Activated T-helper 2 cell treated with anti-CD3 and anti-CD28 coated beads, Interferon-gamma antibody, Interleukin-2, Interleukin-4, amounts not matched to agents 10 μg/mL and 5 μg/mL and 100 μg/mL, durations not matched to agents 14 hours and 24 hours and 36 hours (primary cell): ENCODE measurements at regions of chr3 and their contacts with region 1.

Region 1: DNA sequence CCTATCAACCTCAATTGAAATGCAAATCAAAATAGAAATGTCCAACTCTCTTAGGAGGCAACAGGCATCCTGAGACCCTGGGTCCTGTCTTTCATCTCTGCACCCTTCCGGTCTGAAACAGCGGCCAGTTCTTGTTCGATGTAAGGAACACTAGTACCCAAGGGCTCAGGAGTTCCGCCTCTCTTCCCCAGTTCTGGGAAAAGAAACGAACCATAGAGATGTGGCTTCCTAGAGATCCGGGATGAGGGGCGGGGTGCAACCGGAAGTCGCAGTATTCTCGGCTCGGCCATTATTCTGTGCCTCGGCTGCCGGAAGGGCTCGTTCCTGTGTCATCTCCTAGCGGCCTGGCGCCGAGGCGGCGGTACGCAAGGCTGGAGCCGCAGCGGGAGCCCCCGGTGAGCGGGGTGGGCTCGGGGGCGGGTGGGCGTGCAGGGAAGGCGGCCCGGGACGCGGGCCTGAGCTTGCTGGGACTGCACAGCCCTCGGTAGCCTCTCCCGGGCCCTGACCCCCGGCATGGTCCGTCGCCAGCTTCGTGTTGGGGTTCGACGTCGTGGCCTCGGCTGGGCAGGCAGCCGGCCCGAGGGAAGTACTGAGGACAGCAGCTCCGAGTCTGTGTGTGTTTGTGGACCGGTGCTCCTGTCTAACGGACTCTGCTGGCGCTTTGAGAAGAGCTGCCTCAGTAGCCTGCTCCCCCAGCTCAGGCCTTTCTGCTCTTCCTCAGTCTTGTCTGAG is at the start of gene ZNF197:
- DNase-seq: peak; percentile 53
- H3K4me3 Mint-ChIP-seq: peak within 1 kb of the TSS; percentile 88
- H3K27ac Mint-ChIP-seq: peak within 1 kb of the TSS; percentile 69
- H3K4me1 Mint-ChIP-seq: peaks cover 17% of the 10 kb centered on the region
- H3K27me3 Mint-ChIP-seq: no peaks in the 10 kb centered on the region
- total RNA-seq, gene ZNF197: 10.4 and 10.7 TPM in 2 replicates

Region 2: GRCh38 chr3:44477312-44478030 is 147.4 kb before region 1 on chr3 and contains the start of gene ZNF445:
- intact Hi-C with region 1: loop called (anchors 5 kb)
- DNase-seq: peak; percentile 76
- H3K4me3 Mint-ChIP-seq: peak within 1 kb of the TSS; percentile 91
- H3K27ac Mint-ChIP-seq: peak within 1 kb of the TSS; percentile 82
- H3K4me1 Mint-ChIP-seq: peaks cover 27% of the 10 kb centered on the region
- H3K27me3 Mint-ChIP-seq: no peaks in the 10 kb centered on the region
- total RNA-seq, gene ZNF445: 22.6 and 24.0 TPM in 2 replicates

Region 3: GRCh38 chr3:44648564-44649229 is 23.8 kb after region 1 on chr3 and contains the start of gene ZNF35:
- intact Hi-C with region 1: loop called (anchors 2 kb)
- DNase-seq: peak; percentile 14
- H3K4me3 Mint-ChIP-seq: peak within 1 kb of the TSS; percentile 84
- H3K27ac Mint-ChIP-seq: no peak within 1 kb of the TSS
- H3K4me1 Mint-ChIP-seq: peaks cover 11% of the 10 kb centered on the region
- H3K27me3 Mint-ChIP-seq: no peaks in the 10 kb centered on the region
- total RNA-seq, gene ZNF35: 2.9 and 4.7 TPM in 2 replicates

Region 4: GRCh38 chr3:44761424-44762169 is 136.7 kb after region 1 on chr3 and contains the starts of genes KIAA1143 and KIF15:
- intact Hi-C with region 1: no loop called
- DNase-seq: peak; percentile 94
- H3K4me3 Mint-ChIP-seq: peak within 1 kb of the TSS; percentile 96
- H3K27ac Mint-ChIP-seq: peak within 1 kb of the TSS; percentile 90
- H3K4me1 Mint-ChIP-seq: peaks cover 22% of the 10 kb centered on the region
- H3K27me3 Mint-ChIP-seq: no peaks in the 10 kb centered on the region
- total RNA-seq, gene KIAA1143: 39.2 and 43.7 TPM in 2 replicates
- total RNA-seq, gene KIF15: 28.5 and 28.7 TPM in 2 replicates